HCT116 (cell line): ENCODE measurements at regions of chrX and their contacts with region 1.

Region 1: DNA sequence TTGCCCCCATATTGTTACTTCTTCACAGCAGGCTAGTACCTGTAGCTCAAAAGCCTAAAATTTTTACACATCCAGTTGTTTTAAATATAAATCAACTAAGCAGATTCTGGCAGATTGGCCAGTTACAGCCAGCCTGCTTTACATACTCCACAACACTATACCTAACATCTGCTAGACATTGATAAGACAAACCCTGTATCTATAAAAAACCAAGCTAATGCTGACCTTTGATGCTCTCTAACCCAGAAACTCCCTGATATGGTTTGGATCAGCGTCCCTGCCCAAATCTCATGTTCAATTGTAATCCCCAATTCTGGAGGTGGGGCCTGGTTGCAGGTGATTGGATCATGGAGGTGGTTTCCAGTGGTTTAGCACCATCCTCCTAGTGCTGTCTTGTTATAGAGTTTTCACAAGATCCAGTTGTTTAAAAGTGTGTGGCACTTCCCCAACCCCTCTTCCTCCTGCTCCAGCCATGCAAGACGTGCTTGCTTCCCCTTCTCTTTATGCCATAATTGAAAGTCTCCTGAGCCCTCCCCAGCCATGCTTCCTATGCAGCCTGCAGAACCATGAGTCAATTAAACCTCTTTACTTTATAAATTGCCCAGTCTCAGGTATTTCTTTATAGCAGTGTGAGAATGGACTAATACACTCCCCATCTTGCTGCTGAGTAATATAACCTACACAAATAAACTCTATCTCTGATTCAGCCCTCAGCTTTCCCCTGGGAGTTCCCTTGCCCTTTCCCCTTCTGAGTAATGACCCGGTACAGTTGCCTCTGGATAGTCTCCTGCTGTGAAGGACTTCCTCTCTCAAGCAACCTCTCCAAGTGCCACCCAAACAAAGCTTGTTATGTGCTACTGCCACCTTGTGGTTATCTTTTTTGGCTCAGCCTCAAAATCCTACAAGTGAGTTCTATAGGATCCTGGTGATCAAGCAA is 39.6 kb downstream of the ZCCHC13 start:
- DNase-seq: peak; percentile 77
- ATAC-seq: peak; percentile 95
- H3K4me3 ChIP-seq: no peak overlapping the region
- H3K27ac ChIP-seq: no peak overlapping the region
- H3K4me1 ChIP-seq: peaks cover 3 to 8% of the 10 kb centered on the region in 2 experiments; a peak in 1 of 4 replicates
- H3K27me3 ChIP-seq: no peaks in the 10 kb centered on the region
- CTCF ChIP-seq: peak; percentile 46 to 60 (median 53); a peak in 5 of 6 replicates
- POLR2A ChIP-seq: no peak
- RAD21 ChIP-seq: peak; percentile 77

Region 2: DNA sequence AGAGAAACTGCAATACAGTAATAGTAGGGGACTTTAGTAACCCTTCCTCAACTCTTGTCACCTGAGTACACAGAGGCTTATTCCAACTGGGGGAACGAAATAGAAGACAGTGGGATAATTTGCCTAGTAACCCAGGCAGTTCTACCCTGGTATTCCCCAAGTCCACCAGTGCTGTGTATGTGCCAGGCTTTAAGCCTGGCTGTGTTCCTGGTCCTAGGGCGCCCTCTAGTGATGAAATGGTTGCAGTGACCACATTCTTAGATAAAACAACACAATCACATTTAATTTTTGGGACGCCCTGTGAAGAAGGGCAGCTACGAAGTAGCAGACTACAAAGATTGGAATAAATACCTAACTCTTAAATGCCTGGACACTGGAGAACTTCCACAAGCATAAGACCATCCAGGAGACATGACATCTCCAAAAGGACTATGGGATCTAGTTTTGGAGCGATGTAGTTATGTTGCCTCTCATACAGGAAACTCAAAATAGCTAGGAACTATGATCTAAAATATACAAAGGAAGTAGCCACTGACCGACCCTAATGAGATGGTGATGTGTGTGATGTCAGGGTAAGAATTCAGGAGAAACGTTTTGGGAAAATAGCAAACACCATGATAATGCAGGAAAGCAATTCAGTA is 328.1 kb before region 1 on chrX:
- CTCF ChIA-PET with region 1: no interaction called
- POLR2A ChIA-PET with region 1: no interaction called
- RAD21 ChIA-PET with region 1: no interaction called
- intact Hi-C with region 1: loop called (anchors 2 kb)
- DNase-seq: peak; percentile 40
- ATAC-seq: peak; percentile 88
- H3K4me3 ChIP-seq: no peak overlapping the region
- H3K27ac ChIP-seq: no peak overlapping the region
- H3K4me1 ChIP-seq: no peaks in the 10 kb centered on the region
- H3K27me3 ChIP-seq: no peaks in the 10 kb centered on the region
- CTCF ChIP-seq: peak; percentile 51 to 69 (median 53); a peak in 5 of 6 replicates
- POLR2A ChIP-seq: no peak
- RAD21 ChIP-seq: peak; percentile 78

Region 3: DNA sequence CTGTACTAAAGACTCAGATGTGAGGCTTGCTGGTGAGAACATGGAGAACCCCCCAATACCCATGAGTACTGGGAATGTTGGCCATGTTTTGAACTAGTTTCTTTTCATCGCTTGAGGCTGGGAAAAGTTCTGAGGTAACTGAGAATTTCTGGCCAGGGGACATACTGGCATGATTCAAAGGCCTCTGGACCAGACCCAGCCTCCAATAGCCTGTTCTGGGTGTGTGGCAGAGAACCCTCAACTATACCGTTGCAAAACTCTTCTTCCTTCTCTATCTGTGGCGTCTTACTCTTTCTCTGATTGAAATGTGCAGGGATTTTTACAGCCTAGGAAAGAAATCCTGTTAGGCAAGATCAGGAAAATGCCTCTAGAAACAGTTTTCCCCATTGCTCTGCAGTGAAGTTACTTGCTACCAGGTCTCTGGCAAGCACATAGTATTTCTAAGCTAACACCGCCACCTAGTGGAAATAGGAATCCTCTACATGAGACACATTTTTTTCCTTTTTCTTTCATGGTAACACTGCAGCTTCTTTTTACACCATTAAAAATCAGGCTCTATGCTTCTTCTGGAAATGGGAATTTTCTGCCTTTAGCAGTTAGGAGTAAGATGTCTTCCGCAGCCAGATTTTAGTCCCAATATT is 210.3 kb before region 1 on chrX:
- CTCF ChIA-PET with region 1: no interaction called
- POLR2A ChIA-PET with region 1: no interaction called
- RAD21 ChIA-PET with region 1: no interaction called
- intact Hi-C with region 1: loop called (anchors 10 kb)
- DNase-seq: peak; percentile 10
- ATAC-seq: peak; percentile 71
- H3K4me3 ChIP-seq: no peak overlapping the region
- H3K27ac ChIP-seq: no peak overlapping the region
- H3K4me1 ChIP-seq: no peaks in the 10 kb centered on the region
- H3K27me3 ChIP-seq: no peaks in the 10 kb centered on the region
- CTCF ChIP-seq: peak; percentile 35 to 63 (median 48); a peak in 5 of 6 replicates
- POLR2A ChIP-seq: no peak
- RAD21 ChIP-seq: peak; percentile 75

Region 4: GRCh38 chrX:74248889-74249288 is 94.7 kb before region 1 on chrX:
- CTCF ChIA-PET with region 1: no interaction called
- POLR2A ChIA-PET with region 1: no interaction called
- RAD21 ChIA-PET with region 1: no interaction called
- intact Hi-C with region 1: loop called (anchors 10 kb)
- DNase-seq: no peak
- ATAC-seq: peak; percentile 67
- H3K4me3 ChIP-seq: no peak overlapping the region
- H3K27ac ChIP-seq: peak overlapping the region; percentile 67
- H3K4me1 ChIP-seq: peaks cover 30 to 54% of the 10 kb centered on the region in 2 experiments
- H3K27me3 ChIP-seq: no peaks in the 10 kb centered on the region
- CTCF ChIP-seq: no peak
- POLR2A ChIP-seq: no peak
- RAD21 ChIP-seq: no peak

Region 5: DNA sequence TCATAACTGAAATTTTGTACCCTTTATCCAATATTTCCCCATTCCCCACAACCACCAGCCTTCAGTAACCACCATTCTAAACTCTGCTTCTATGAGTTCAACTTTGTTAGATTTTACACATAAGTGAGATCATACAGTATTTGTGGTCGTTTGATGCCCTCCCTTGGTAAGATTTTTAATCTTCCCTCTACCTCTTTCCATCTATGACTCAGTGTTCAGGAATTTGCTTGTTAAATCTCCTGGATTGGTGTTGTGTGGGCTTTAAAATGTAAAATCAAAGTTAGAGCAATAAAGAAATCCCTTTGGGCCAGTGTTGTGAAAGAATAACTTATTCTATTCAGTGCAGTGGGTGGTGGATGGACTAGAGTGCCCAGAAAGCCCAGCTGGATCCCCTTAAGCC is 115.1 kb after region 1 on chrX:
- CTCF ChIA-PET with region 1: no interaction called
- POLR2A ChIA-PET with region 1: no interaction called
- RAD21 ChIA-PET with region 1: no interaction called
- intact Hi-C with region 1: no loop called
- DNase-seq: no peak
- ATAC-seq: peak; percentile 74
- H3K4me3 ChIP-seq: no peak overlapping the region
- H3K27ac ChIP-seq: no peak overlapping the region
- H3K4me1 ChIP-seq: peaks cover 2 to 5% of the 10 kb centered on the region in 2 experiments; a peak in 2 of 4 replicates
- H3K27me3 ChIP-seq: no peaks in the 10 kb centered on the region
- CTCF ChIP-seq: 0 out of 6 replicates have a peak, but pooled peaks of 2 of the 3 experiments have one; percentile 10 to 15
- POLR2A ChIP-seq: no peak
- RAD21 ChIP-seq: peak; percentile 54

Region 6: GRCh38 chrX:74521961-74522751 is 178.5 kb after region 1 on chrX:
- CTCF ChIA-PET with region 1: no interaction called
- POLR2A ChIA-PET with region 1: no interaction called
- RAD21 ChIA-PET with region 1: no interaction called
- intact Hi-C with region 1: no loop called
- DNase-seq: no peak
- ATAC-seq: no peak
- H3K4me3 ChIP-seq: no peak overlapping the region
- H3K27ac ChIP-seq: no peak overlapping the region
- H3K4me1 ChIP-seq: peaks cover 0 to 7% of the 10 kb centered on the region in 2 experiments; a peak in 2 of 4 replicates
- H3K27me3 ChIP-seq: no peaks in the 10 kb centered on the region
- CTCF ChIP-seq: no peak
- POLR2A ChIP-seq: no peak
- RAD21 ChIP-seq: no peak

Region 7: GRCh38 chrX:74550295-74550802 is 206.7 kb after region 1 on chrX:
- CTCF ChIA-PET with region 1: no interaction called
- POLR2A ChIA-PET with region 1: no interaction called
- RAD21 ChIA-PET with region 1: no interaction called
- intact Hi-C with region 1: loop called (anchors 5 kb)
- DNase-seq: peak; percentile 51
- ATAC-seq: peak; percentile 93
- H3K4me3 ChIP-seq: no peak overlapping the region
- H3K27ac ChIP-seq: no peak overlapping the region
- H3K4me1 ChIP-seq: no peaks in the 10 kb centered on the region
- H3K27me3 ChIP-seq: no peaks in the 10 kb centered on the region
- CTCF ChIP-seq: peak; percentile 86 to 99 (median 91)
- POLR2A ChIP-seq: no peak
- RAD21 ChIP-seq: peak; percentile 90

Region 8: DNA sequence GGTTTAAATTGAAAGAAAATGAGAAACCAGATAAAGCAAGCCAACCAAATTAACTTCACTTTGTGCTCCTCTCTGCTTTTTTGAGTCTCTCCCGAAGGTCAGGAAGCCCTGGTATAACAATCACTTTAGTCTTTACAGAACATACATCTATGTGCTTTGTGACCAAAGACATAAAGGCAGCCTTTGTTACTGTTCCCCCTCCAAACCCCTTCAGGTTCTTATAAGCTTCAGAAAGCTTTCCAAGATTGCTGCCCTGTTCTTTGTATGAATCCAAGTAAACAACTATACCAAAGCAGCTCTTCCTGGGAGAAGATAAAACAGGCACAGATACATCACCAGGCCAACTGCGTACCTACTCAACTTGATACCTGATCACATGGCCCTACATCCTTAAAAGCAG is 242.2 kb after region 1 on chrX:
- CTCF ChIA-PET with region 1: no interaction called
- POLR2A ChIA-PET with region 1: no interaction called
- RAD21 ChIA-PET with region 1: no interaction called
- intact Hi-C with region 1: no loop called
- DNase-seq: no peak
- ATAC-seq: no peak
- H3K4me3 ChIP-seq: no peak overlapping the region
- H3K27ac ChIP-seq: no peak overlapping the region
- H3K4me1 ChIP-seq: no peaks in the 10 kb centered on the region
- H3K27me3 ChIP-seq: no peaks in the 10 kb centered on the region
- CTCF ChIP-seq: no peak
- POLR2A ChIP-seq: no peak
- RAD21 ChIP-seq: no peak

Region 9: DNA sequence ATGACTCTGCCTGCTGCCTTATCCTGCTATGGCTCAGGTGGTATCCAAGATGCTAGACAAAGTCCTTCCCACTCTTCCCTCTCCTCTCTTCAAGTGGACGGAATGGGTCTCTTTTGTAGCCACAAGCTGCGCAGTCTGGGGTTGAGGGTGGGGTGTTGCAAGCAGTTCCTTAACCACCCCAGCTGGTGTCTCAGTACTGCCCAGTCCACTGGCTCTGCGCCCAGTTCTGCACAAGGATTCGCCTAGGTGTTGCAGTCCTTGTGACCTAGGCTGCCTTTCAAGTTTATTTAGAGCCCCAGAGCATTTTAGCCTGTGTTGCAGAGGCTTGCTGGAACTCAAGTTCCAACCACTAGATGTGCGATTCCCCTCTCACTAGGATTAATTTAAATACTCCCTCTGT is 461.0 kb after region 1 on chrX:
- CTCF ChIA-PET with region 1: no interaction called
- POLR2A ChIA-PET with region 1: no interaction called
- RAD21 ChIA-PET with region 1: no interaction called
- intact Hi-C with region 1: no loop called
- DNase-seq: no peak
- ATAC-seq: no peak
- H3K4me3 ChIP-seq: no peak overlapping the region
- H3K27ac ChIP-seq: no peak overlapping the region
- H3K4me1 ChIP-seq: no peaks in the 10 kb centered on the region
- H3K27me3 ChIP-seq: no peaks in the 10 kb centered on the region
- CTCF ChIP-seq: no peak
- POLR2A ChIP-seq: no peak
- RAD21 ChIP-seq: no peak